Aorta (tissue), 5 donors: ENCODE measurements at regions of chr10 and their contacts with region 1.

Region 1: GRCh38 chr10:109773288-109774120 is 149.8 kb downstream of the XPNPEP1 start:
- DNase-seq: no peak
- ATAC-seq: no peak
- H3K4me3 ChIP-seq: no peak overlapping the region
- H3K27ac ChIP-seq: no peak overlapping the region
- H3K4me1 ChIP-seq: no peaks in the 10 kb centered on the region
- H3K27me3 ChIP-seq: no peaks in the 10 kb centered on the region

Region 2: DNA sequence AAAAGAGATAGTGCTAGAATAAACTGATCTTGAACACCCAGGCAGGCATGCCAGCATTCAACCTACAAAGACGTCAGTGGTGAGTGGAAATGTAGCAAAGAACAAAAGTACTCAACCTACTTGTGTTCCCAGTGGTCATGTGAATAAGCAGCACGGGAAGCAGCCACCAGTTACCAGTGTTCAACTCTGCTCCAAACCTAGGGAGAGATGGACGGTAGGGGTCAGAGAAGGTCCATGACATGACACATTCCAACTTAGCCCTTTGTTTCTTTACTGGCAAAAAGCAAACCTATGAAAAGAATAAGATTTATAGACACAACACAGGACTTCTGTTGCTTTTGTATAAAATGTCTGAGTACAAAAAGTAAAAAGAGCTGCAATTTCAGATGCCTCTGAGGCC is 361.6 kb before region 1 on chr10:
- intact Hi-C with region 1: loop called in 1 of 2 experiments (anchors 5 kb)
- DNase-seq: no peak
- ATAC-seq: no peak
- H3K4me3 ChIP-seq: no peak overlapping the region
- H3K27ac ChIP-seq: no peak overlapping the region
- H3K4me1 ChIP-seq: no peaks in the 10 kb centered on the region
- H3K27me3 ChIP-seq: no peaks in the 10 kb centered on the region

Region 3: GRCh38 chr10:109762555-109762954 is 10.9 kb before region 1 on chr10:
- intact Hi-C with region 1: no loop called
- DNase-seq: no peak
- ATAC-seq: no peak
- H3K4me3 ChIP-seq: no peak overlapping the region
- H3K27ac ChIP-seq: no peak overlapping the region
- H3K4me1 ChIP-seq: no peaks in the 10 kb centered on the region
- H3K27me3 ChIP-seq: no peaks in the 10 kb centered on the region

Region 4: DNA sequence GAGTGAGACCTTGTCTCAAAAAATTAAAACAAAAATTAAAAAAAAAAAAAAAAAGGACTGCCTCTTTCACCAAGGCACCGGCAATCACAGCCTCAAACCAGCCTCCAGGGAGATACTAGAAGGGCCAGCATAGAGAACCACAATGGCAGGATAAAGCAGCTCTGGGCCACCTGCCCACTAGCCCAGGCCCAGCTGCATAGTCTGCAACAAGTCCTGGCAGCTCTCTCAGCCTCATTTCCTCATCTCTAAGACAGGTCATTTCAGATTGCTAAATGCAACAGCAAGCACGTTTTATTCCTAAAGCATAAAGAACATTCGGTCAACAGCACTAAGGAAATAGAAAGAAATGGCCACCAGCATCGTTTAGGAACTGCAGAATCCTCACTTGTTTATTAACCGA is 121.0 kb after region 1 on chr10:
- intact Hi-C with region 1: no loop called
- DNase-seq: peak; percentile 83
- ATAC-seq: peak; percentile 81
- H3K4me3 ChIP-seq: no peak overlapping the region
- H3K27ac ChIP-seq: peak overlapping the region; percentile 68 to 86
- H3K4me1 ChIP-seq: peaks cover 7 to 19% of the 10 kb centered on the region in 2 donors
- H3K27me3 ChIP-seq: no peaks in the 10 kb centered on the region

Region 5: GRCh38 chr10:109934958-109935706 is 161.6 kb after region 1 on chr10:
- intact Hi-C with region 1: no loop called
- DNase-seq: no peak
- ATAC-seq: peak; percentile 56
- H3K4me3 ChIP-seq: no peak overlapping the region
- H3K27ac ChIP-seq: peak overlapping the region in 1 of 2 donors; percentile 37
- H3K4me1 ChIP-seq: no peaks in the 10 kb centered on the region
- H3K27me3 ChIP-seq: no peaks in the 10 kb centered on the region